Transverse colon (tissue), 4 donors: ENCODE measurements at regions of chr18 and their contacts with region 1.

Region 1: GRCh38 chr18:76875390-76876325 is 53.3 kb downstream of the ZNF236 start:
- DNase-seq: peak; percentile 54
- H3K4me3 ChIP-seq: no peak overlapping the region
- H3K27ac ChIP-seq: no peak overlapping the region
- H3K4me1 ChIP-seq: no peaks in the 10 kb centered on the region
- H3K27me3 ChIP-seq: no peaks in the 10 kb centered on the region
- CTCF ChIP-seq: peak; percentile 60 to 68 (median 65)
- EP300 ChIP-seq: no peak
- POLR2A ChIP-seq: no peak

Region 2: GRCh38 chr18:76803814-76804213 is 71.8 kb before region 1 on chr18:
- in situ Hi-C with region 1: no loop called
- intact Hi-C with region 1: loop called (anchors 10 kb)
- DNase-seq: peak; percentile 74
- H3K4me3 ChIP-seq: peak overlapping the region in 1 of 4 donors; percentile 10
- H3K27ac ChIP-seq: peak overlapping the region in 3 of 4 donors; percentile 24 to 35 (median 27)
- H3K4me1 ChIP-seq: peaks cover 5 to 22% (median 15%) of the 10 kb centered on the region in 4 donors
- H3K27me3 ChIP-seq: peaks cover 17% of the 10 kb centered on the region
- CTCF ChIP-seq: peak; percentile 71 to 75 (median 72)
- EP300 ChIP-seq: no peak
- POLR2A ChIP-seq: no peak